ENCODE measurements at regions of chr6 and their contacts with region 1.

Region 1: DNA sequence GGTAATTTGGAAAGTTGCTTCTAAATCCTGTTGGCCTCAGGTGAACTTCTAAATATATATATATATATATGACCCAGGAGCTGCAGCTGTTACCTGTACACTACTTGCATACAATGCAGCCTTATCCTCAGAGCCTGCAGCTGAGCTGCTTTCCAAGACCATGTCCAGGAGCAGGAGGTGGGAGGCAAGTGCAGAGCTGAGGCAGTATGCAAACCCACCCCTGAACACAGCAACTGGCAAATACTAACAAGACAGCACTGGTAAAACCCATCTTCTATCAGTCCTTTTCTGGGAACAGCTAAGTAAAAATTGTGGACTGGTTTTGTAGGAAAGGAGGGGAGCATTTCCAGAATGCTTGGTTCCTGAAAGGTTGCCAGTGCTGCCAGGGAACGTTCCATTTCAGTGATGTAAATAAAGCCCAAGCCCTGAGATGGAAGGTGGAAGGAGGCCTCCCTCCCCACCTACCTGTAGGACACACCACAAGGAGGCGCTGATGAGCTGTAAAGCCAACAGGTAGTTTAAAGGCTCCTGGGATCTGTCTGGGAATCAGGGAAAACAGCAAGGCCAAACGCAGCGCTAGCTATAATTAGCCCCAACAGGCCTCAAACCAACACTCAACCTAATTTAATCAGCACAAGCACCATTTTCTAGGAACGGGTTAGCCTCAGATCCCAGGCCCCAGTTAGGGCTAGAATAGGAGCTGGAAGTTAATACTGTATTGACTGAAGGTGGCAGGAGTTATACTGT is 93.8 kb upstream of the MAP7 start:
- H3K4me3 Mint-ChIP-seq: no peak overlapping the region
- H3K27ac Mint-ChIP-seq: no peak overlapping the region
- H3K4me1 Mint-ChIP-seq: no peaks in the 10 kb centered on the region
- H3K27me3 Mint-ChIP-seq: no peaks in the 10 kb centered on the region

Region 2: GRCh38 chr6:136582711-136583471 is 61.1 kb before region 1 on chr6:
- intact Hi-C with region 1: loop called (anchors 5 kb)
- H3K4me3 Mint-ChIP-seq: no peak overlapping the region
- H3K27ac Mint-ChIP-seq: peak overlapping the region; percentile 74
- H3K4me1 Mint-ChIP-seq: peaks cover 11% of the 10 kb centered on the region
- H3K27me3 Mint-ChIP-seq: no peaks in the 10 kb centered on the region

Region 3: GRCh38 chr6:136792410-136793262 is 148.6 kb after region 1 on chr6 and contains the start of gene MAP3K5:
- intact Hi-C with region 1: loop called (anchors 1 kb)
- H3K4me3 Mint-ChIP-seq: peak within 1 kb of the TSS; percentile 99
- H3K27ac Mint-ChIP-seq: peak within 1 kb of the TSS; percentile 99
- H3K4me1 Mint-ChIP-seq: peaks cover 50% of the 10 kb centered on the region
- H3K27me3 Mint-ChIP-seq: no peaks in the 10 kb centered on the region

Region 4: DNA sequence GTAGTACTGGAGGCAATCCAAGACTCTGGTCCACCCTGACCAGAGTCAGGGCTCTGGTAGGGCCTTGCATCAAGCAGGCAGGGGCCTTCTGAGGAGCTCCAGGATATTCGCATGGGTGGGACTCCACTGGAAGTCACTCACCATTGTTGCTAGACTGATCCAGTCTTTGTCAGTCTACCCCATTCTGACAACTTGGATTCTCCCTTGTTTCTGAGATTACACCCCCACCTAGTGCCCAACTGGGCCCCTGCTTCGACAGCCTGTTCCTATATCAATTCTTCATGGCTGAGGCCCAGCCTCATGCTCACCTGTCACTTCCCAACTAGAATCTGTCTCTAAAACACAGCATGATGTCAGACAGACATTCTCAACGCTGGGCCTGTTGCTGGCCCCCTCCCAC is 283.3 kb after region 1 on chr6:
- intact Hi-C with region 1: loop called (anchors 10 kb)
- H3K4me3 Mint-ChIP-seq: no peak overlapping the region
- H3K27ac Mint-ChIP-seq: no peak overlapping the region
- H3K4me1 Mint-ChIP-seq: peaks cover 17% of the 10 kb centered on the region
- H3K27me3 Mint-ChIP-seq: peaks cover 51% of the 10 kb centered on the region

Measured in dendritic cell treated with granulocyte-macrophage colony-stimulating factor and Interleukin-4, amounts not matched to agents 40 ng/mL and 50 ng/mL, for 4 days (primary cell).